AG04449 (cell line): ENCODE measurements at regions of chr7 and their contacts with region 1.

Region 1: GRCh38 chr7:45259966-45260646 is 102.5 kb downstream of the RAMP3 start:
- DNase-seq: no peak
- H3K4me3 ChIP-seq: no peak overlapping the region
- CTCF ChIP-seq: peak; percentile 99

Region 2: GRCh38 chr7:45157653-45158401 is 102.3 kb before region 1 on chr7 and contains the start of gene RAMP3:
- CTCF ChIA-PET with region 1: interaction called, 141 read pairs
- POLR2A ChIA-PET with region 1: no interaction called
- DNase-seq: no peak
- H3K4me3 ChIP-seq: no peak within 1 kb of the TSS
- CTCF ChIP-seq: no peak

Region 3: DNA sequence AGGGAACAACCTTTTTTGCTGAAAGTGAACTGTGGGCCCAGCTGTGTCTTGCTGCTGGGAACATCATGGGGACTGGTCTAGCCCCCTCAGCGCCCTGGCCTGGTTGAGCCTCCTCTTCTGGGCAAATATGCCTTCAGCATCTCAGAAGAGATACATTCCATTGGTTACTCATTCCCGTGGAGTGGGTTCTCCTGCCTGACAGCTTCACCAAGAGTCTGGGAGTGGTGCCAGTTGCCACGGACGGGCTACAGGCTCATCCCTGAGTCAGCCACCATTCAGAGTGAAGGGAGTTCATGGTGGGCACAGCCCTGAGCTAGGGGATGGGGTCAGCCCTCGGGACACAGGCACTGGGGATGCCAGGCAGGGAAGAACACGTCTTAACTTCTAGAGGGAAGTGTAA is 20.6 kb before region 1 on chr7:
- CTCF ChIA-PET with region 1: interaction called, 14 read pairs
- POLR2A ChIA-PET with region 1: no interaction called
- DNase-seq: peak; percentile 41
- H3K4me3 ChIP-seq: no peak overlapping the region
- CTCF ChIP-seq: no peak

Region 4: DNA sequence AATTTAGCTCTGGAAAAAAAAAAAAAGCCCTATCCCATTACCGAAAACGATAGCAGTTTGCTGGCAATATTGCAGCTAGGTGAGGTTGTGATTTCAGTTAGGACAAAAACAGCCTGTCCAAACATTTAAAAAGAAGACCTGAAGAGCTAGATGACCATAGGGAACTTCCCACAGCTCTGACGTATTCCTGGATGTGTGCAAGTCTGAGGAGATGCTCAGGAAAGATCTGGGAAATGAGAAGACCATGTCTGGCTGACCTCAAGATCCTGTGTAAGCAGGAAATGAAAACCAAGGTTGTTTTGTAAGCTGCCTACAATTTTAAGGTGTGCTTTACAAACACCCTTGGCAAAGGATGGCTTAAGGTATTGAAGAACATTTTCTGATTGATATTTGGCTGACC is 13.8 kb before region 1 on chr7:
- CTCF ChIA-PET with region 1: interaction called, 18 read pairs
- POLR2A ChIA-PET with region 1: no interaction called
- DNase-seq: no peak
- H3K4me3 ChIP-seq: no peak overlapping the region
- CTCF ChIP-seq: no peak

Region 5: GRCh38 chr7:45347804-45348412 is 87.8 kb after region 1 on chr7:
- CTCF ChIA-PET with region 1: no interaction called
- POLR2A ChIA-PET with region 1: no interaction called
- DNase-seq: no peak
- H3K4me3 ChIP-seq: no peak overlapping the region
- CTCF ChIP-seq: no peak

Region 6: DNA sequence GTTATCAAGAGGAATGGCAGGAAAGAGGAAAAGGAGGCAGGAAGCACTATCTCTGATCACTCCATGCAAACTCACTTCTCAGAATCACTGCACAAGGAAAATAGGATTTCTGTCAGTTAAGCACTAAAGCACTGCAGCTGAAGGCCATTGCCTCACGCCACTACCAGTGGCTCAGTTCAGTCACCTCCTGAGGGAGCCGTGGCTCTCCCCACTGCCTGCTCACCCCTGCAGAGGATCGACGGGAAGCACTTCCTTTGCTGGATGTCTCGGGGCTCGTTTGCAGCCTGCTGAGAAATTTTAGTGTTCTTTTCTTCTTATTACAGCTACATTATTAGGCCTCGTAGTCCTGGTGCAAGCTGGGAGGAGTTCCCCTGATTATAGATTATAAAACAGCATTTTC is 224.0 kb after region 1 on chr7:
- CTCF ChIA-PET with region 1: no interaction called
- POLR2A ChIA-PET with region 1: no interaction called
- DNase-seq: no peak
- H3K4me3 ChIP-seq: no peak overlapping the region
- CTCF ChIP-seq: no peak